GM10248 (cell line): ENCODE measurements at regions of chr7 and their contacts with region 1.

Region 1: DNA sequence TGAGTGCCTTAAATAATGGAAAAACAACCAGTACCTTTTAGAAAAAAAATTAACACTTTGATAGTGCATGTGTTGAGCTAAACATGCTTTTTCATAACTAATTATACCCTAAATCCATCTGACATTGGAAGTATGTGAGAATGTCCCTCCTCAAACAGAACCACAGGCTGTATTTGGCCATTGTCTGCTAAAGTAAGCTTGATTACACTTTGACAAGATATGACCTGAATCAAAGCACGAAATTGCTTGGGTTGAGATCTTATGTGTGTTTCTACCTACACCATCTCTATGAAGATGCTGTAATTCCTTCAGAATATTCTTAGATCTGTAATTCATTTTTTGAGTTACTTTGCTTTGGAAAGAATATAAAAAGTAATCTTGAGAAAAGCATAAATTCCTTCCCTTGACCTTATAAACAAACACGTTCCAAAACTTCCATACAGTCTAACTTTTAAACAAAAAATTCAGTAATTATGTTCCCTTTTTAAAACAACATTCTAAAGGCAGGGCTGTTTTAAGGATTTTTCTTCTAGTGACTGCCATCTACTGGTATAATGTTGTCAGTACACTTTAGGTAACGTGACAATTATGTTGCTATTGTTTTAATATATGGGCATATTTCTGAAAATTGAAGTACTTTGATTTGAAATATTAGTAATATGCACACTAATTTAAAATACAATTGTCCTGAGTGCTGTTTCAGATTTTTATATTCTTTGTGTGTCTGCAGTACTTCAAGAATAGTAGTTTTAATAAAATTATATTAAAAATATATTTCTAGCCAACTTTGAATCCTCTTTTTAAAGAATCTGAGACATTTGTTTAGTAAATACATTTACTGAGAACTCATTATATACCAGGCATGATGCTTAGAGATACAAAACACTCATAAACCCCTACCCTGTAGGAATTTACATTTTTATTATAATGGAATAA is 20.9 kb downstream of the CD36 start:
- DNase-seq: peak; percentile 24
- CTCF ChIP-seq: peak; percentile 60

Region 2: GRCh38 chr7:80428161-80429054 is 231.0 kb before region 1 on chr7:
- CTCF ChIA-PET with region 1: interaction called, 12 read pairs
- POLR2A ChIA-PET with region 1: no interaction called
- DNase-seq: peak; percentile 17
- CTCF ChIP-seq: peak; percentile 45

Region 3: GRCh38 chr7:80833289-80834268 is 174.2 kb after region 1 on chr7:
- CTCF ChIA-PET with region 1: no interaction called
- POLR2A ChIA-PET with region 1: no interaction called
- DNase-seq: no peak
- CTCF ChIP-seq: no peak